ENCODE measurements at regions of chr1 and their contacts with region 1.

Region 1: DNA sequence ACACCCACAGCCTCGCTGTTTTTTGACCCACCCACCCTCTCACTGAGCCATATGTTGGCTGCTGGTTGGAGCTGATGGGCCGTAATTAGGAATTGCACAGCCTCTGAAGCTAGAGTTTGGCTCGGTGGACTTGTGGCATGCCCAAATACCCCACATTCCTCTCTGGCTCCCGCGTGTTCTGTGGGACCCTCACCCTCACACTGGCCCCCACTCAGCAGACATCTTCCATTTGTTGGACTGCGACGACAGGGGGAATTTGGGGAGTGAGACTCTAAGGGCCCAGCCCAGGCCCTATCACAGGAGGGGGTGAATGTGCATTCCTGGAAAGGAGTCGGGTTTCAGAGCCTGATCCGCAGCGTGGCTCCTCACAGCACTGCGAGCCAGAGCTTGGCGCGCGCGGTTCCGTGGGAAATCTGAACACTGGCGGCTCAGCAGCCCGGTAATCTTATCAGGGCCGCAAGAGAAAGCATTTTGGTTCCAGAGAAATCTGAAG is 5.2 kb downstream of the RCSD1 start:
- DNase-seq: no peak
- ATAC-seq: no peak
- H3K4me3 ChIP-seq: peak overlapping the region; percentile 41; the same call in 1 of the 2 replicates
- H3K27ac ChIP-seq: 0 out of 2 replicates have a peak overlapping the region, but pooled peaks have one; percentile 79
- H3K4me1 ChIP-seq: peaks cover 43% of the 10 kb centered on the region
- H3K27me3 ChIP-seq: no peaks in the 10 kb centered on the region
- CTCF ChIP-seq: no peak
- EP300 ChIP-seq: no peak
- POLR2A ChIP-seq: no peak
- RAD21 ChIP-seq: no peak

Region 2: GRCh38 chr1:167617153-167618147 is 17.8 kb before region 1 on chr1:
- CTCF ChIA-PET with region 1: interaction called, 9 read pairs
- POLR2A ChIA-PET with region 1: interaction called, 29 read pairs
- RAD21 ChIA-PET with region 1: interaction called, 13 read pairs
- SMC1A ChIA-PET with region 1: interaction called, 14 read pairs
- in situ Hi-C with region 1: no loop called
- intact Hi-C with region 1: no loop called
- DNase-seq: peak; percentile 74
- ATAC-seq: peak; percentile 87
- H3K4me3 ChIP-seq: peak overlapping the region; percentile 62
- H3K27ac ChIP-seq: peak overlapping the region; percentile 70
- H3K4me1 ChIP-seq: peaks cover 22% of the 10 kb centered on the region
- H3K27me3 ChIP-seq: no peaks in the 10 kb centered on the region
- CTCF ChIP-seq: no peak
- EP300 ChIP-seq: no peak
- POLR2A ChIP-seq: peak; percentile 58
- RAD21 ChIP-seq: no peak

Region 3: DNA sequence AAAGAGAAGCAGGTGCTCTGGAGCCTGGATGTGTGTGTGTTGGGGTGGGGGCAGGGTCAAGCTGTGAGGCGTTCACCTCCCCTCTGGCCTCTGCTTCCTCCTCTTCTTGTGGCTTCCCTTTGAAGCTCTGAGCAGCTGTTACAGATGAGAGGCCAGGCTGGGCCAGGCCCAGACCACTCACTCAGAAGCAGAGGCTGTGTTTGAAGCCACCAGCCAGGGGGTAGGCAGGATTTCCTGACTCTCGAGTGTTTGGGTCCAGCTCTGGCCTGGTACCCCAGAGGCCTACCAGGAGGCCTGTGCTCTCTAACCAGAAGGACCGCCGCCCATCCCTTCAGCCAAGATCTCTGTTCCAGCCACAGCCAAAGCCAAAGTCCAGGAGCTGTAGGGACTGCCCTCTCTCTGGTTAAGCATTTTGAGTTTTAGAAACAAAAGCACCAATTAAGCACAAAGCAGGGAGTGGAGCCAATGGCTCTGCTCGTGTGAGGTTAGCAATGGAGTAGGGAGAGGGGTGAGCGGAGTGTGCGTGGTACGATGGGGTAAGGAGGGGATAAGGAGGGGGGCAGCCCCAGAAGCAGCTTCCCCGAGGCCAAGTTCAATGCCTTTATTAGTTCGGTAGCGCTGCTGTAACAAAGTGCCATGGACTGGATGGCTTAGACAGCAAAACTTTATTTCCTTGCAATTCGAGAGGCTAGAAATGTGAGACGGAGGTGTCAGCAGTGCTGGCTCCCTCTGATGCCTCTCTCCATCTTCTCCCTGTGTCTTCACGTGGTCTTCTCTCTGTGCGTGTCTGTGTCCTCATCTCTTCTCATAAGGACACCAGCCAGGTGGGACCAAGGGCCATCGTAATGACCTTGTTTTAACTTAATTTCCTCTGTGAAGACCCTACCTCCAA is 15.3 kb after region 1 on chr1:
- CTCF ChIA-PET with region 1: interaction called, 6 read pairs
- POLR2A ChIA-PET with region 1: interaction called, 16 read pairs
- RAD21 ChIA-PET with region 1: interaction called, 25 read pairs
- SMC1A ChIA-PET with region 1: interaction called, 70 read pairs
- in situ Hi-C with region 1: no loop called
- intact Hi-C with region 1: no loop called
- DNase-seq: no peak
- ATAC-seq: peak; percentile 92
- H3K4me3 ChIP-seq: no peak overlapping the region
- H3K27ac ChIP-seq: peak overlapping the region; percentile 55
- H3K4me1 ChIP-seq: peaks cover 39% of the 10 kb centered on the region
- H3K27me3 ChIP-seq: no peaks in the 10 kb centered on the region
- CTCF ChIP-seq: no peak
- EP300 ChIP-seq: no peak
- POLR2A ChIP-seq: peak; percentile 23; the same call in 1 of the 2 replicates
- RAD21 ChIP-seq: no peak

Region 4: DNA sequence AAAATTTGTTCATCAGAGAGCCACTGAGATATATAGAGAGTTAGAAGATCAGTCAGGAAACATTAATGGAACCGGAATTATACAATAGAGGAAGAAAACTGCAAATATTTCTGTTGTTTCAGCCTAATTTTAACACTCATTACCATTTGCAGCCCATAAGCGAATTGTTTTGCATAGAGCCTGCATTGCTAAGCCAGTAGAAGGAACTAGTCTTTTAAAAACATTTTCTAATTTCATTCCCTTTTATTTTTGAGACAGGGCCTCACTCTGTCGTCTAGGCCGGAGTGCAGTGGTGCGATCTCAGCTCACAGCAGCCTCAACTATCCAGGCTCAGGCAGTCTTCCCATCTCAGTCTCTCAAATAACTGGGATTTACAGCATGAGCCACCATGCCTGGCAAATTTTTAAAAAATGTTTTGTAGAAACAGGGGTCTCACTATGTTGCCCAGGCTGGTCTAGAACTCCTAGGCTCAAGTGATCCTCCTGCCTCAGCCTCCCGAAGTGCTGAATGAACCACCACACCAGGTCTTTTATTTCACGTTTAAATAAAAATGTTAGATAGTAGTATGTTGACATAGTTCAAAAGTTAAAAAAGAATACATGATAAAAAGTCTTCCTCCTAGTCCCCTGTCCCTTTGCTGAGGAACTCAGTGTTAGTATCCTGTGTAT is 111.9 kb after region 1 on chr1:
- CTCF ChIA-PET with region 1: no interaction called
- POLR2A ChIA-PET with region 1: no interaction called
- RAD21 ChIA-PET with region 1: no interaction called
- SMC1A ChIA-PET with region 1: no interaction called
- in situ Hi-C with region 1: no loop called
- intact Hi-C with region 1: no loop called
- DNase-seq: no peak
- ATAC-seq: no peak
- H3K4me3 ChIP-seq: no peak overlapping the region
- H3K27ac ChIP-seq: peak overlapping the region; percentile 41
- H3K4me1 ChIP-seq: peaks cover 10% of the 10 kb centered on the region
- H3K27me3 ChIP-seq: no peaks in the 10 kb centered on the region
- CTCF ChIP-seq: no peak
- EP300 ChIP-seq: no peak
- POLR2A ChIP-seq: no peak
- RAD21 ChIP-seq: no peak